Sciatic nerve (tissue), 2 donors: ENCODE measurements at regions of chr3 and their contacts with region 1.

Region 1: DNA sequence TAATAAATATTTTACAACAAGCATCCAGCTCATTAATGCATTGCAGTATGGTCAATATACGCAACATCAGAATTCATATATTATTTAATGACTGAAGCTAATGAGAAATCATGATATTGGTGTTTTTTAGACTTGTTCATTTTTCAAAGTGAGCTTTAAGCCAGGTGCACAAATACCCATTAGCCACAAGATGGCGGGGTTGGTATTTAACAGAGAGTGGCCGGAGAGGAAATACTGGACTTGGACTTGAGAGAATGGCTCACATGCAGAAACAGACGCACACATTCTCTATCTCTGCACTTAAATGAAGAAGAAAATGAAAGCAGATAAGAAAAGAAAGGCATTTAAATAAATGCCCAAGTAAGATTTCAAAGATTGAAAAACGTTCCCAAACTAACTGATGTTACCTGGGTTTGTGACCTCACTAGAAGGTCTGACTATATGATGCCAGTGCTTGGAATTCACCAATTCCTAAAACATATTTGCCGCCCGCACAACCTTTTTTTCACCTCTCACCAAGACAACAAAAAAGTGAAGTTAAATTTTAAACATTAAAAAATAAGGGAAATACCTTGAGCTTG is 21.2 kb upstream of the CRBN start:
- DNase-seq: peak; percentile 66
- ATAC-seq: peak; percentile 73

Region 2: GRCh38 chr3:3089017-3089416 is 111.7 kb before region 1 on chr3:
- intact Hi-C with region 1: no loop called
- DNase-seq: no peak
- ATAC-seq: no peak

Region 3: GRCh38 chr3:3499012-3499562 is 298.4 kb after region 1 on chr3:
- intact Hi-C with region 1: no loop called
- DNase-seq: no peak
- ATAC-seq: no peak

Region 4: GRCh38 chr3:4271834-4272233 is 1071.1 kb after region 1 on chr3:
- intact Hi-C with region 1: loop called (anchors 5 kb)
- DNase-seq: no peak
- ATAC-seq: no peak